Activated naive CD4-positive, alpha-beta T cell treated with anti-CD3 and anti-CD28 coated beads for 36 hours (primary cell): ENCODE measurements at regions of chr10 and their contacts with region 1.

Region 1: DNA sequence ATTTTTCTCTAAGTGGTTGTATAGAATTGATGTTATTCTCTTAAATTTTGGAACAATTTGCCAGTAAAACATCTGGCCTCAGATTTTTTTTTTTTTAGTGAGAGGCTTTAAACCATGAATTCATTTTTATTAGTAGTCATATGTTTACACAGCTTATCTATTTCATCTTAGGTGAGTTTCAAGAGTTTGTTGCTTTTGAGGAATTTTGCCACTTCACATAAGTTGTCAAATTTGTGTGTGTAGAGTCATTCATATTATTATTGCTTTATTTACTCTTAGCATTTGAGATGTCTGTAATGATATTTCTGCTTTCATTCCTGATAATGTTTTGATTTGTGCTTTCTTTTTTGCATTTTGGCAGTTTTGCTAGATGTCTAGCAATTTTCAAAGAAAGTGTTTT is 132.1 kb downstream of the CCSER2 start:
- DNase-seq: no peak
- H3K4me3 Mint-ChIP-seq: no peak overlapping the region
- H3K27ac Mint-ChIP-seq: no peak overlapping the region
- H3K4me1 Mint-ChIP-seq: peaks cover 6% of the 10 kb centered on the region
- H3K27me3 Mint-ChIP-seq: no peaks in the 10 kb centered on the region

Region 2: DNA sequence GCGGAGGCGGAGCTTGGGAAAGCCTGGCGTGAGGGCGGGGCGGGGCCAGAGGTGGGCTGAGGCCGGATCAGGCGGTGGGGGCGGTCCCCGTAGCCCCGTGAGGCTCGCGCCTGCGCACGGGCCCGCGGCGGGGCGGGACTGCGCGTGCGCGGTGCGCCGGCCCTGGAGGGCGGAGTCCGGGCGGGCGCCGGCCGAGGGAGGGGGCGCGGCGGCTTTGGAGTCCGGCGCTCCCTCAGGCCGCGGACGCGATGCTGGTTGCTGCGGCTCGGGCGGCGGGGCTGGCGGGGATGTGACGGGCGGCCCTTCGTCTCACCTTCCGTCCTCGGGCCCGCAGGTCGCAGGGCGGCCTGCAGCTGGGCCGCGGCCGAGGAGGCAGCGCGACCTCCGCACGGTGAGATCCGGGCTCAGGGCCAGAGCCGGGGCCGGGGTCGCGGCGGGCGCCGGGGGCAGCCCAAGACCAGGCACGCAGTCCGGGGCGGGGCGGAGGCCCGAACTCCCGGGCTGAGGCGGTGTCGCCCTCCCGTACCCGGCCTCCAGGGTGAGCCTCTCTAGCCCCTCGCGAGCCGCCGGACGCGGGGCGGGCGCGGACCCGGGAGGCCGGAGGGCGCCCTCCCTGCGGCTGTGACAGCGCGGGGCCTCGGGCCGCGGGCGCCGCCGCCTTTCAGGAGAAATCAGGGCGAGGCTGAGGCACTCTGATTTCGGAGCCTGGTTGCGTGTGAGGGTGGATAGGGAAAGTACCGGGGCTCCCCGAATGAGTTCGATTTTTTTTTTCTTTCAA is 131.9 kb before region 1 on chr10 and contains the start of gene CCSER2:
- CTCF ChIA-PET with region 1: no interaction called
- intact Hi-C with region 1: no loop called
- DNase-seq: peak; percentile 97
- H3K4me3 Mint-ChIP-seq: peak within 1 kb of the TSS; percentile 95
- H3K27ac Mint-ChIP-seq: peak within 1 kb of the TSS; percentile 96
- H3K4me1 Mint-ChIP-seq: peaks cover 26% of the 10 kb centered on the region
- H3K27me3 Mint-ChIP-seq: no peaks in the 10 kb centered on the region
- total RNA-seq, gene CCSER2: 78.0 to 81.8 TPM

Region 3: GRCh38 chr10:84440781-84441180 is 19.7 kb before region 1 on chr10:
- CTCF ChIA-PET with region 1: no interaction called
- intact Hi-C with region 1: loop called (anchors 2 kb)
- DNase-seq: no peak
- H3K4me3 Mint-ChIP-seq: no peak overlapping the region
- H3K27ac Mint-ChIP-seq: no peak overlapping the region
- H3K4me1 Mint-ChIP-seq: peaks cover 2% of the 10 kb centered on the region
- H3K27me3 Mint-ChIP-seq: no peaks in the 10 kb centered on the region

Region 4: DNA sequence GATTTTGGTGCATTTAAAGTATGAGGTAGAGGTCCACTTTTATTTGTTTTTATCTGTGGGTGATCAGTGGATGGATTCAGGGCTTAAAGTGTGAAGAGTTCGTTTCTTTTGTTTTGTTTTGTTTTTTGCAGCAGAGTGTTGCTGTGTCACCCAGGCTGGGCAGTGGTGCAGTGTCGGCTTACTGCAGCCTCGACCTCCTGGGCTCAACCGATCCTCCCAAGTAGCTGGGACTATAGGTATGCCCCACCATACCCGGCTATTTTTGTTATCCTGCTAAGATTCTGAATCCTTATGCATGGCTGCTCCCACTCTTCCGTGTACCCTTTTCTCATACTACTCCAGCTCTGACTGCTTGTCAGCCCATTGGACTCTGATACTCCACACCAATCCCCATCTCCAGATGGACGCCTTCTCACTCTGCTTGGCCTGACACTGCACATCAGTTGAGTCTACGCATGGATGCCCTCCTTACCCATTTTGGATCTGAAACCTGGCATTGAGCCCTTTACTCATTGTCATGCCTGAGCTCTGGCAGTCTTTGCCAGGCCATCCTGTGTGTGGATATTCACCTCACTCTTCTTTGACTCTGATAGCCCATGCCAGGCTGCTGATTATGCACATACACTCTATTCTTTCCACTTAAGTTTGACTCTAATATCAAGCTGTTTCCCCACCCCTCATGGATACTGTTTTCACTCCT is 12.7 kb before region 1 on chr10:
- CTCF ChIA-PET with region 1: no interaction called
- intact Hi-C with region 1: loop called (anchors 2 kb)
- DNase-seq: no peak
- H3K4me3 Mint-ChIP-seq: no peak overlapping the region
- H3K27ac Mint-ChIP-seq: no peak overlapping the region
- H3K4me1 Mint-ChIP-seq: no peaks in the 10 kb centered on the region
- H3K27me3 Mint-ChIP-seq: no peaks in the 10 kb centered on the region

Region 5: GRCh38 chr10:84493361-84493760 is 32.8 kb after region 1 on chr10:
- CTCF ChIA-PET with region 1: no interaction called
- intact Hi-C with region 1: no loop called
- DNase-seq: no peak
- H3K4me3 Mint-ChIP-seq: no peak overlapping the region
- H3K27ac Mint-ChIP-seq: no peak overlapping the region
- H3K4me1 Mint-ChIP-seq: peaks cover 13% of the 10 kb centered on the region
- H3K27me3 Mint-ChIP-seq: no peaks in the 10 kb centered on the region